MCF 10A (cell line): ENCODE measurements at regions of chr15 and their contacts with region 1.

Region 1: GRCh38 chr15:91867581-91868026 is 14.1 kb downstream of the SLCO3A1 start:
- DNase-seq: peak; percentile 98
- H3K4me3 Mint-ChIP-seq: peak overlapping the region; percentile 54
- H3K27ac Mint-ChIP-seq: peak overlapping the region; percentile 90
- H3K4me1 Mint-ChIP-seq: peaks cover 29% of the 10 kb centered on the region
- H3K27me3 Mint-ChIP-seq: no peaks in the 10 kb centered on the region
- CTCF ChIP-seq: no peak

Region 2: GRCh38 chr15:91833056-91833455 is 34.5 kb before region 1 on chr15:
- CTCF ChIA-PET with region 1: no interaction called
- POLR2A ChIA-PET with region 1: no interaction called
- intact Hi-C with region 1: no loop called
- DNase-seq: no peak
- H3K4me3 Mint-ChIP-seq: no peak overlapping the region
- H3K27ac Mint-ChIP-seq: no peak overlapping the region
- H3K4me1 Mint-ChIP-seq: no peaks in the 10 kb centered on the region
- H3K27me3 Mint-ChIP-seq: peaks cover 30% of the 10 kb centered on the region
- CTCF ChIP-seq: no peak

Region 3: DNA sequence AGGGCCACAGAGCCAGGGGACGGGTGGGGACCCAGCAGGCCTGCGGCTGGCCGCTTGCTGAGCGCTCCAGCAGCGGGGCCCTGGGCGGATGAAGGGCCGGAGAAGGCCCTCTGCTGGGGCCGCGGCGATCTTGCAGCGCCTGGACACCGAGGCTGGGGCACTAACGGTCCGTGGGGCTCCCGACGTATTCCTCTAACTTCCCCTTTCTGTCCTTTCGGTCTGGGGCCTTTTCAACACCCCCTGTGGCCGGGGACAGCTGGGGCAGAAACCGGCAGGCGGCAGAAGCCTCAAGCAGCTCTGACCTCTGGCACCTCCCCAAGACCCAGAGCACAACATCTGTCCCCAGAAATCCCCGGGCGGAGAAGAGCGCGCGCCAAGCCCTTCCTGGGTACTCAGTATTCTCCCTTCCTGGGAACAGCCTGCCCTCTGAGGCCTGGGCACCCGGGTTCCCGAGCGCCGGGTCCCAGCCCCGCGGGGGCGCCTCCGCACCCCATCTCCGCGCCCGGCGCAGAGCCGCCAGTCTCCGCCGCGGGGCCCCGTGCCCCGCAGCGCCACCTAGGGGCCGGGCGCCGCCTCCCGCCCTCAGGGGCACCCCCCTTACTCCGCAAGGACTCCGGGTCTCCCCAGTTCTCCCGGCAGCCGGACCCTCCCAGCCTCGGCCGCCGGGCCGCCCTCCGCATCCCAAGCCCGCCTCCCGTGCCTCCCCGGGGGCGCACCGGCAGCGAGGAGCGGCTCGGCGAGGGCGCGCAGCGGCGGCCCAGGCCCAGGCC is 14.7 kb before region 1 on chr15:
- CTCF ChIA-PET with region 1: interaction called, 24 read pairs
- POLR2A ChIA-PET with region 1: interaction called, 81 read pairs
- intact Hi-C with region 1: no loop called
- DNase-seq: peak; percentile 66
- H3K4me3 Mint-ChIP-seq: peak overlapping the region; percentile 75
- H3K27ac Mint-ChIP-seq: peak overlapping the region; percentile 61
- H3K4me1 Mint-ChIP-seq: peaks cover 42% of the 10 kb centered on the region
- H3K27me3 Mint-ChIP-seq: no peaks in the 10 kb centered on the region
- CTCF ChIP-seq: peak; percentile 78

Region 4: DNA sequence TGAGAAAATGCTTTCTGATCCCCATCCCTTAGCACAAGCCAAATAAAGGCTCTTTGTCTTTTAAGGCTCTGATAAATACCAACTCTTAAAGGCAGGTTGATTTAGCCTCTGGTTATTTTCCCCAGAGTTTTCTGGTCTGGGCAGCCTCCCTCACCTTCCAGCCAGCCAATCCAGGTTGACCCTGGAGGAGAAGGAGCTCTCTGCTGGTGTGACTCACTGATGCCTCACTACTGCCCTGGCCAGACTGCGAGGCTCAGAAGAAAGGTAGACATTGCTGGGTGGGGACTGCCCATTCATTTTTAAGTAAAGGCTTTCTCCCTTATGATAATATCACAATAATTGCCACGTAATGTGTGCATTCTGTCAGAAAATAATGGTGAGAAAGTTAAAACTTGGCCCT is 23.0 kb after region 1 on chr15:
- CTCF ChIA-PET with region 1: interaction called, 5 read pairs
- POLR2A ChIA-PET with region 1: interaction called, 37 read pairs
- intact Hi-C with region 1: loop called (anchors 1 kb)
- DNase-seq: peak; percentile 88
- H3K4me3 Mint-ChIP-seq: no peak overlapping the region
- H3K27ac Mint-ChIP-seq: peak overlapping the region; percentile 34
- H3K4me1 Mint-ChIP-seq: peaks cover 20% of the 10 kb centered on the region
- H3K27me3 Mint-ChIP-seq: no peaks in the 10 kb centered on the region
- CTCF ChIP-seq: no peak

Region 5: DNA sequence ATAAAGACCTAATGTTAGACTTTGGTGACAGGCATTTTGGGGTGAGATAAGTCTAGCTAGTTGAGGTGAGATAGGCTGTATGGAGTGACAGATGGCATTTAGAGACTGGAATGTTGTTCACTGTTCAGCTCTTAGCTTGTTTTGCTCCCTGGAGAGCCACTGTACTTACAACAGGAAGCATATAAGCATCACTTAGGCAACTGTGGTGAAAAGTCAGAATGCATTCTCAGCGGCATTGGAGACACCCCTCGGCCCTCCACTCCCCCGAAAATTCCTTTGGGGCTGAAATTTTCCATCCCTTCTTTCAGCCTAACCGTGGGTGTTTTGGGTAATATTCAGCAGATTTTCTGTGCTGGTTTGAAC is 59.3 kb after region 1 on chr15:
- CTCF ChIA-PET with region 1: interaction called, 3 read pairs
- POLR2A ChIA-PET with region 1: interaction called, 12 read pairs
- intact Hi-C with region 1: no loop called
- DNase-seq: no peak
- H3K4me3 Mint-ChIP-seq: no peak overlapping the region
- H3K27ac Mint-ChIP-seq: no peak overlapping the region
- H3K4me1 Mint-ChIP-seq: peaks cover 15% of the 10 kb centered on the region
- H3K27me3 Mint-ChIP-seq: no peaks in the 10 kb centered on the region
- CTCF ChIP-seq: no peak

Region 6: DNA sequence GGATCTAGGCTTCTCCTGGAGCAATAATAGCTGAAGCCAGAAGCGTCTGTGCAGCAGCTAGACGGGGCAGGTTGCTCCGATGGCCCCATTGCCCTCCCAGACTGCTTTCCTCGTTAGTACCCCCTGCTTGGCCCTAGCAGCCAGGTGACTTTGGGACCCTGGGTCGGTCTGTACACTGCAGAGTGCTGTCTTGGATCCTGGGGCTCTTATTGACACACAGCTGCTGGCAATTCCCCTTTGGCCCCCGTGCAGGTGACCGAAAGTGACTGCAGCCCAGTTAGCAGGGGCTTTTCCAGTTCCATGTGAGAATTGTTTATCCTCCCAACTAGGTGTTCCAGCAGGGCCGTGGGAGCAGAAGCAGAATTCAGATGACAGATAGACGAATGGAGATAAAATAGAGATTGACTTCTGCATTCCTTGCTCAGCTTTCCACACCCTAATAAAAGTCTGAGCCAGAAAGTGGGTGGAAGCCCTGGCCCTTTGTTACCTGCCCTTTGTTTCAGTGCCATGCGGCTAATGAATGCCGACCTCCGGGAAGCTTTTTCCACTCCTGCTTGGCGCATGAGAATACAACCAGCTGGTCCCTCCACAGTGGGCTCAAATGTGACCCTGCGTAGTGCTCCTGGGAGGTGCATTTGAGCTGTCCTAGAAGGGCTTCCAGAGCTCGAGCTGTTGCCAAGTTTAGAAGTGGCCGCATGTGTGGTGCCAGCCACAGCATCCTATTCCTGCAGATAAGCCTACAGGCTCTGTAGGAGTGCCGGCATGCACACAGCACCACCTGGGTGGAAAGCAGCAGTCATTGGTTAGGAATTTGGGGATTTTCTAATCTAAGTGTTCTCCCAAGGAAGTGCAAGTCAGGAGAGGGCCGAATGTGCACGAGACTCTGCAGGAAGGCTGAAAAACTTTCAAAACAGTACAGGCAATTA is 80.3 kb after region 1 on chr15:
- CTCF ChIA-PET with region 1: interaction called, 22 read pairs
- POLR2A ChIA-PET with region 1: interaction called, 45 read pairs
- intact Hi-C with region 1: no loop called
- DNase-seq: peak; percentile 74
- H3K4me3 Mint-ChIP-seq: peak overlapping the region; percentile 49
- H3K27ac Mint-ChIP-seq: peak overlapping the region; percentile 90
- H3K4me1 Mint-ChIP-seq: peaks cover 72% of the 10 kb centered on the region
- H3K27me3 Mint-ChIP-seq: no peaks in the 10 kb centered on the region
- CTCF ChIP-seq: no peak

Region 7: DNA sequence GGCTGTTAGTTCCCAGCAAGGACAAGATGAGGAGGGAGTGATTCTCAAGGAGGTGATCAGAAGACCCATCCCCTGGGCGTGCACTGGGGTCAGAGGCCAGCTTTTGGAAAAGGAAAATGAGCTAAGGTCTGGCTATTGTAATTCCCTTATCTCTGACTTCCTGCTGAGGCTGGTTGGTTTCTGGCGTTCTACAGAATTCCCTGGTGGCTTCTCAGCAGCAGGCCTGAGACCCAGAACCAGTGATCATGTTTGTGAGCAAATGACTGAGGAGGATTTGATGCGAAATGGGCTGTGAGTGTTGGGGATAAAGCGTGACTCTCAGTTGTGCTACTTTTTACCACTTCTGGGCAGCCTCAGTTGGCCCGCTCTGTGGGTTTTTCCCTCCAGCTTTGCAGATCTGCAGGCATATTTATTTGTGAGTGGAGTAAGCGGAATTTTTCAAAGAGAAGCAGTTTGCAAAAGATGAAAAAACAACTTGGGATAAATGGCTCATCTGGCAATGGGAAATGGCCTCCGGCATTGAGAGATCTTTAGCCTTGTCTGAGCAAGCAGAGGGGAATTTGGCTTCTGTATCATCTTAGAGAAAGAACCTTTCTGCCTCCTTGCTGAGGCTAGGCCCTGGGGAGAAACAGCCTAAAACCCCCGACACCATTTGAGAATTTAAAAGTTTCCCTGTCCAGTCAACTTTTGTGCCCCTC is 88.6 kb after region 1 on chr15:
- CTCF ChIA-PET with region 1: interaction called, 3 read pairs
- POLR2A ChIA-PET with region 1: interaction called, 45 read pairs
- intact Hi-C with region 1: no loop called
- DNase-seq: peak; percentile 82
- H3K4me3 Mint-ChIP-seq: no peak overlapping the region
- H3K27ac Mint-ChIP-seq: peak overlapping the region; percentile 94
- H3K4me1 Mint-ChIP-seq: peaks cover 47% of the 10 kb centered on the region
- H3K27me3 Mint-ChIP-seq: no peaks in the 10 kb centered on the region
- CTCF ChIP-seq: no peak

Region 8: GRCh38 chr15:91965501-91966184 is 98.0 kb after region 1 on chr15:
- CTCF ChIA-PET with region 1: interaction called, 3 read pairs
- POLR2A ChIA-PET with region 1: interaction called, 21 read pairs
- intact Hi-C with region 1: no loop called
- DNase-seq: peak; percentile 98
- H3K4me3 Mint-ChIP-seq: peak overlapping the region; percentile 60
- H3K27ac Mint-ChIP-seq: peak overlapping the region; percentile 96
- H3K4me1 Mint-ChIP-seq: peaks cover 47% of the 10 kb centered on the region
- H3K27me3 Mint-ChIP-seq: no peaks in the 10 kb centered on the region
- CTCF ChIP-seq: no peak